ENCODE measurements at regions of chr3 and their contacts with region 1.

Region 1: DNA sequence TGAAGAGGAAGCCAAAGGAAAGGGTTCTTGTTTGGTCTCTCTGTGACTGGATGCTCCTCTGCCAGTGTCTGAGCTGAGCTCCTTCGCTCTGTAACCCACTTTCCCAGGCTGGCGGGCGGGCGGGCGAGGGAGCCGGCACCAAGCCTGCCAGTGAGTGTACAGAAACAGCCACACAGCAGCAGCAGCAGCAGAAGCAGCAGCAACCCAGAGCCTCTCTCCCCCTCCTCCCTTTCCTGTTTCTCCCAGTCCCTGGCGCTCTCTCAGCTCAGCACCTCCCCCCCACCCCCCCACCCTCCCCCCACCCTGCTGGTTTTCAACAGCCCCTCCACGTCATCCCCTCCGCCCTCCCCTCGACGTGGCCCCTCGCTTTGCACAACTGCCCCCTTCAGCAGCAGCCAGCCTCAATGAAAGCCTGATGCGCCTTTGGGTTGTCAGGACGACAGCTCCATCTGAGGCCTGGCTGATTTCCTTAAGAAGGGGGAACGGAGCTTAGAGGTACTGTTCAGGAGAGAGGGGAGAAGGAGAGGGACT is at the start of gene LSAMP:
- DNase-seq: peak; percentile 65 to 93 (median 82)

Region 2: GRCh38 chr3:116140100-116140689 is 305.2 kb before region 1 on chr3:
- intact Hi-C with region 1: loop called (anchors 5 kb)
- DNase-seq: no peak

Region 3: DNA sequence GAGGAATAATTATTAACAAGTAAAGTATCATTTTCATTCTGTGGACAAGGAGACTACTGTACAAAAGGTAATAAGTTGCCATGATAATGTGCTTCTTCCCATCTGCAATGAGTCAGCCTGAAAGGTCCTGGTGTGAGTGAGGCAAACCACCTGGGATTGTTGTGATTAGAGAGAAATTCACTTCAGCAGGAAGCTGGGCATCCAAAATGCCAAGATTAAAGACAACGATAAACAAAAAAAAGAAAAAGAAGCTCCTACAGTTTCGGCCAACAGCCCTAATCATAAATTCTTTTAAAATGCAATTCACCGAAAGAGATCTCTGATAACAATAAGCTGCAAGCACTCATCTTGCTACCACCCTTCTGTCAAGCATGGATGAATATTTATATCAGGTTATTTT is 772.0 kb after region 1 on chr3:
- intact Hi-C with region 1: no loop called
- DNase-seq: no peak

Measured in head of caudate nucleus (tissue), 42 donors.